Right ventricle myocardium inferior (tissue), 1 donor: ENCODE measurements at regions of chr6 and their contacts with region 1.

Region 1: GRCh38 chr6:157571269-157571668 is 190.3 kb downstream of the ZDHHC14 start:
- DNase-seq: no peak
- ATAC-seq: no peak

Region 2: DNA sequence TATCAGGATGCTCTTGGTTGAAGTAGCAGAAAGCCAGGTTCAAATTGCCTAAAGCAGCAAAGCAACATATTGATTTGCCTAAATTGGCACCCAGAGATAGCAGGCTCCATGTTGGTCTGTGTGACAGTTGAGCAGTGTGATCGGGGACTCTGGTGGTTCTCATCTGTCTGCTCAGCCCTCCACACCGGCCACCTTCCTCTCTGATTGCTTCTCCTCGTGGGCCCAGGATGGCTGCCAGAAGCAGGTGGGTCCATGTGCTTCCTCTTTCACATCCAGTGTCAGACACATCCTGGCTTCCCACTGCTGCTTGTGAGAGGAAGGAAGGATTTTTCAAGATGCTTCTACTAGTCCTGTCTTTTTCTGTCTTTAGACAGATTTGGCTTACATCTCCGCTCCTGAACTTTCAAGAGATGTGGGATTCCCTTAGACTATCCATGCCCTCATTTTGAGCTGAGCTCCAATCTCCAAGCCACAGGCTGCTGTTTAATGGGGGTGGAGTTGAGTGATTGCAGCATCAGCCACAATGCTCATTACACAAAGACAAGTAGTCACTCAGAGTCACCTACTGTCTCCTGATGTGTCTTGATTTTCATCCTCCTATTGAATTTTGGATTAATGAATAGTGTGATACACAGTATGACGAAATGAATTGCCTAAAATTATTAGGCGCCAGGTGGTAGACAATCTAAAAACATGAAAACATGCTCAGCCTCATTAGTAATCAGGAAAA is 68.1 kb before region 1 on chr6:
- intact Hi-C with region 1: loop called (anchors 10 kb)
- DNase-seq: no peak
- ATAC-seq: no peak